PC-9 (cell line): ENCODE measurements at regions of chr6 and their contacts with region 1.

Region 1: GRCh38 chr6:125611573-125612344 is 137.7 kb upstream of the HEY2 start:
- DNase-seq: peak in 1 of 2 experiments; percentile 15
- H3K4me3 ChIP-seq: no peak overlapping the region
- H3K27ac ChIP-seq: no peak overlapping the region
- H3K4me1 ChIP-seq: no peaks in the 10 kb centered on the region
- H3K27me3 ChIP-seq: no peaks in the 10 kb centered on the region
- CTCF ChIP-seq: no peak

Region 2: DNA sequence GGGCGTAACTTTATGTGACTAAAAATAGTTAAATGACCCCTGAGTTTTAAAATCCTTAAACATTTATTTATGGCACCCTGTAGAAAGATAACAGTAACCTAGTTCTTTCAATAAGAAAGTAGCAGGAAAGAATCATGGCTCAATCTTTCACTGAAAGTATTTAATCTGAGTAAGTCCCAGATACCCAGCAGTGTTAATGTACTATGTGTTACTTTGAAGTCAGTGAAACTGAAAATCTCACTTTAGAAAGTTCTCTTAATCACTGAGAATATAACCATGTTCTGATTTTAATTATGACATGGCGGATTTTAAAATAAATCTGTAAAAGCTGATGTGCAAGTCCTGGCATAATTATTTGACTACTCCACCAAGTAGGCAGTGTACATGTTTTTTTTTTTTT is 129.6 kb after region 1 on chr6:
- CTCF ChIA-PET with region 1: interaction called, 4 read pairs
- POLR2A ChIA-PET with region 1: interaction called, 10 read pairs
- intact Hi-C with region 1: no loop called
- DNase-seq: no peak
- H3K4me3 ChIP-seq: no peak overlapping the region
- H3K27ac ChIP-seq: no peak overlapping the region
- H3K4me1 ChIP-seq: peaks cover under 1% of the 10 kb centered on the region
- H3K27me3 ChIP-seq: peaks cover 13% of the 10 kb centered on the region
- CTCF ChIP-seq: no peak